ENCODE measurements at regions of chr3 and their contacts with region 1.

Region 1: DNA sequence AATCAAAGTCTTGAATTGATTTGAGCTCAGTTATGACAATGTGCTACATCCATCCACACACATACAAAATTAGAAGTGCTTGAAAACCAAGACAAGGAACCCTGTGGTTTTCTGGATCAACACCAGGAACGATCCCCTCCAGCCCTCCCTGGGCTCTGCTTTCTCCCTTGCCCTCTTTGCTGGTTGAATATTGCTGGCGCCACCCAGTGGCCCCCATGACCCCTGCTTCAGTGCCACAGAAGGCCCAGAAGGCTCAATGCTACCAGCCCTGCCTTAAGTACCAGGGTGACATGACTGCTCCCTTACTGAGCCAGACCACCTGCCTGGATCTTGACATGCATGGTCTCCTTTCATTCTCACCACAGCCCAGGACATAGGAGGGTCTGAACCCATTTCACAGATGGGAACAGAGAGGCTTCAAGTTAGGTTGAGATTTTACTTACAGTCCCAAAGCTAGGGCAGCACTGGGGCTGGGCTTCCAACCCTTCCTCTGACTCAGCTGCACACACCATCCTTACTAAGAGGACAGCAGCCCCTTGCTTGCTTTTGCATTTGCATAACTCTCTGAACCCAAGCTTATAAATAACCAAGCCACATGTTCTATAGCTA is 15.0 kb downstream of the IL12A start:
- DNase-seq: peak; percentile 38
- ATAC-seq: peak; percentile 92
- H3K4me3 Mint-ChIP-seq: no peak overlapping the region
- H3K27ac Mint-ChIP-seq: no peak overlapping the region
- H3K4me1 Mint-ChIP-seq: peaks cover 10% of the 10 kb centered on the region
- H3K27me3 Mint-ChIP-seq: no peaks in the 10 kb centered on the region
- CTCF ChIP-seq: no peak

Region 2: DNA sequence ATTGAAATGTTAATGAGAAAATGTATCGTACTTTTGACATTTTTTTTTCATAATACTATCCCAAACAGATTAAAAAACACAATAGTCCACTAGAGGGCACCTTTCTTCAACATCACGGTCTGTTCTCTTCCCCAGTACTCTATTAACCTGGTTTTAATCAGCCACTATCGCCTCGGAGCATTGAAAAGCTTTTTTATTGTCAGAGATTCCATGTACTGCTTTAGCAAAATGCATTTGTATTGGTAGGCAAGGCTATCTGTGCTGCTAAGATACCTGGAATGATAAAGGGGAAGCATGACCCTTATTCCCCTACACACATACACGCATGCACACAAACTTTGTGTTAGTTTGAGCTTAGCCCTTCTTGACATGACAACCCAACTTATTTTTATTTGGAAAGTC is 175.1 kb before region 1 on chr3:
- CTCF ChIA-PET with region 1: interaction called, 9 read pairs
- POLR2A ChIA-PET with region 1: no interaction called
- intact Hi-C with region 1: loop called (anchors 1 kb)
- DNase-seq: no peak
- ATAC-seq: peak; percentile 31
- H3K4me3 Mint-ChIP-seq: no peak overlapping the region
- H3K27ac Mint-ChIP-seq: no peak overlapping the region
- H3K4me1 Mint-ChIP-seq: peaks cover 4% of the 10 kb centered on the region
- H3K27me3 Mint-ChIP-seq: no peaks in the 10 kb centered on the region
- CTCF ChIP-seq: no peak

Region 3: DNA sequence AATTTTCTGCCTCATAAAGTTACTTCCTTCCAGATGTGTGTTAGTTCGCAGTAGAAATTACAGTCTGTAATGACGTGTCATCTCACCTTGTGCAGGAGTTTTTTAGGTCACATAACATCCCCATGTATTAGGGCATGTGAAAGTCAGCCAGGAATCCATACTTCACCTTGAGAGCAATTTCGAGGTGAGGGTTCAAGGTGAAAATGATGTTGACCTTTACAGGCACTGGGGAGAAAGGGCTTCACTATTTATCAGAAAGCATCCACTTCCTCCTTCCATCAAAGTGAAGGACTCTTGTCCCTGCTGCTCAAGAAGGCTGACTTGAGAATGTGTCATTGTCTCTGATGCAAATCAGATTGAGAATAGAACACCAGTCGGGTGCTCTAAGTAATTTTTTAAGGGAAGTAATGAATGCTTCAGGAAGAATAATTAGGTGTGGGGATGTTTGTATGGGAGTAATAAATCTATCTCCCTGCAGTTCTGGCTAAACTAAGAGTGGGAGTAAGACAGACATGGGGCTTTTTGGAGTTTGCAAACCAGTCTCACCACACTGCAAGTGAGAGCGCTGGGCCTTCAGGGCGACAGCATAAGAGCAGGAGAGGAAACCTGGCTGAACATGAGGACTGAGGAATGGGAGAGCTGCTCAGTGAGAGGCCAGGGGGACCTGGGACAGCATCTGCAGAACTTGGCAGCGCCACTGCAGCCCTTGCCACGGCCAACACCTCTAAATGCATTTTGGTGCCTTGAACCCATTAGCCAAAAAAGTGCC is 100.9 kb before region 1 on chr3:
- CTCF ChIA-PET with region 1: interaction called, 8 read pairs
- POLR2A ChIA-PET with region 1: no interaction called
- intact Hi-C with region 1: loop called (anchors 5 kb)
- DNase-seq: no peak
- ATAC-seq: peak; percentile 59
- H3K4me3 Mint-ChIP-seq: no peak overlapping the region
- H3K27ac Mint-ChIP-seq: peak overlapping the region; percentile 63
- H3K4me1 Mint-ChIP-seq: peaks cover 25% of the 10 kb centered on the region
- H3K27me3 Mint-ChIP-seq: no peaks in the 10 kb centered on the region
- CTCF ChIP-seq: no peak

Region 4: DNA sequence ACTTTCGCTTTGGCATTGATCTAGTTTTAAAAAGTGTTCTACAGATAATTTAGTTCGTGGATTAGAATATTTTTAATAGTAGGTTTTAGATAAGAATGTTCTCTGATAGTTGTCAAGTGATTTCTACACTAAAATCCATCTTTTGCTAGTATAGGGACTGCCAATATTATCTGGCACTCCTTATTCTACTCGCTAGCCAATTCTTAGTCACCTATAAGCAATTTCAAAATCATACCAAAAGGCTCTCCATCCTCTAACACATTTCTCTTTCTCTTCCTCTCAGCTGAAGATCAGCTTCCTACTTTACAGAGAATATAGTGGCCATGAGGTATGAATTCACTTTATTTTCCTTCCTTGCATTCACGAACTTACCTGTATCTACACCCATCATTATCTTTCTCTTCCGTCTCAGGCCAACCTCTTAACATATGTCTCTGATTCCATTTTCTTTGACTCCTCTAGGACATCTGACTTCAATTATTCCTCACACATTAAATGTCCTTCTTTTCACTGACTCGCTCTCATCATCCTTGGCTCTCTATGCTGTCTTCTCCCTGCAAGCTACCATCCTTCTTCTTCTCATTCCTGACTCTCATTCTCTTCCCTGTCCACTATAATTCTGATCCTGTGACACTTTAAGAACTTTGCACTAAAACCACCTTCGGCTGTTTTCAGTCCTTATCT is 257.1 kb after region 1 on chr3:
- CTCF ChIA-PET with region 1: no interaction called
- POLR2A ChIA-PET with region 1: no interaction called
- intact Hi-C with region 1: no loop called
- DNase-seq: no peak
- ATAC-seq: no peak
- H3K4me3 Mint-ChIP-seq: no peak overlapping the region
- H3K27ac Mint-ChIP-seq: no peak overlapping the region
- H3K4me1 Mint-ChIP-seq: no peaks in the 10 kb centered on the region
- H3K27me3 Mint-ChIP-seq: no peaks in the 10 kb centered on the region
- CTCF ChIP-seq: no peak

Measured in activated B cell treated with CpG ODN at 0.5 μM for 24 hours (primary cell).